ENCODE measurements at regions of chr1 and their contacts with region 1.

Region 1: GRCh38 chr1:202750758-202751157 is 40.5 kb upstream of the SYT2 start:
- DNase-seq: no peak
- ATAC-seq: no peak
- H3K4me3 ChIP-seq: no peak overlapping the region
- H3K27ac ChIP-seq: no peak overlapping the region
- H3K4me1 ChIP-seq: no peaks in the 10 kb centered on the region
- H3K27me3 ChIP-seq: no peaks in the 10 kb centered on the region
- CTCF ChIP-seq: peak in 2 of 3 experiments; percentile 20 to 23; a peak in 2 of 6 replicates
- POLR2A ChIP-seq: no peak
- RAD21 ChIP-seq: peak; percentile 52

Region 2: DNA sequence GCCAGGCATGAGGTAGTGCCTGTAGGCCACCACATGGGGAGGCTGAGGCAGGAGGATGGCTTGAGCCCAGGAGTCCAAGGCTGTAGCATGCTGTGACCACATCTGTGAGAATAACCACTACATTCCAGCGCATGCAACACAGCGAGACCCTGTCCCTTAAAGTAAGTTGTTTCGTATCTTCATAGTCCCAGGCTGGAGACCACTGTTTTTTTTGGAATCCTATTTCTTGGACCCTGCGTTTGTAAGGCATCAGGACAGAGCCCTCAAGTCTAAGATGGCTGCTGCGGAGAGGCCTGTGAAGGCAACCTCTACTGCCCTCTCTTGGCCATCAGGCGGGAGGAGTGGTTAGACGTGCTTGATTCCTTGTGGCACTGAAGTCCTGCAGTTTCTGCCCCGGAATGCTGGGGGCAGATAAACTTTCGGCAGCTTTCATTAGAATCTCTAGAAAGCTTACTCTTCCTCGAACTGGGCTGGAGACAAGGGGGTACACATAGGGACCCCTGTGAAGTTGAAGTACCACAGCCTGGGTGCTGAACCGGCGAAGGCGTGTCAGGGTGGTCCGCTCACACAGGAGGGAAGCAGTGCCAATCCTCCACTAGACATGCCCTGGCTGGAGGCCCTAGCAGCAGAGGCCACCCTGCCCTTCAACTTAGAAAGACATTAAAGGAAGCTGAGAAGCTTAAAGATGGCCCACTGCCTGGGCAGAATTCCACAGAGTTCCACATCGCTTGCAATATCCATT is 101.6 kb after region 1 on chr1:
- CTCF ChIA-PET with region 1: no interaction called
- POLR2A ChIA-PET with region 1: no interaction called
- RAD21 ChIA-PET with region 1: no interaction called
- intact Hi-C with region 1: loop called (anchors 5 kb)
- DNase-seq: peak; percentile 70
- ATAC-seq: peak; percentile 99
- H3K4me3 ChIP-seq: no peak overlapping the region
- H3K27ac ChIP-seq: no peak overlapping the region
- H3K4me1 ChIP-seq: peaks cover 0 to 4% of the 10 kb centered on the region in 2 experiments; a peak in 2 of 4 replicates
- H3K27me3 ChIP-seq: no peaks in the 10 kb centered on the region
- CTCF ChIP-seq: peak; percentile 74 to 86 (median 84)
- POLR2A ChIP-seq: no peak
- RAD21 ChIP-seq: peak; percentile 83

Region 3: GRCh38 chr1:202998836-202999750 is 248.3 kb after region 1 on chr1:
- CTCF ChIA-PET with region 1: no interaction called
- POLR2A ChIA-PET with region 1: no interaction called
- RAD21 ChIA-PET with region 1: no interaction called
- intact Hi-C with region 1: loop called (anchors 2 kb)
- DNase-seq: peak; percentile 39
- ATAC-seq: peak; percentile 73
- H3K4me3 ChIP-seq: no peak overlapping the region
- H3K27ac ChIP-seq: no peak overlapping the region
- H3K4me1 ChIP-seq: peaks cover 3 to 11% of the 10 kb centered on the region in 2 experiments; a peak in 2 of 4 replicates
- H3K27me3 ChIP-seq: peaks cover 11% of the 10 kb centered on the region; the same call in 1 of the 2 replicates
- CTCF ChIP-seq: peak; percentile 76 to 90 (median 84)
- POLR2A ChIP-seq: no peak
- RAD21 ChIP-seq: peak; percentile 93

Measured in HCT116 (cell line).